MCF 10A (cell line): ENCODE measurements at regions of chr7 and their contacts with region 1.

Region 1: GRCh38 chr7:128209229-128210035 is 31.6 kb upstream of the LEP start:
- DNase-seq: peak; percentile 80
- H3K4me3 Mint-ChIP-seq: no peak overlapping the region
- H3K27ac Mint-ChIP-seq: no peak overlapping the region
- H3K4me1 Mint-ChIP-seq: peaks cover 4% of the 10 kb centered on the region
- H3K27me3 Mint-ChIP-seq: no peaks in the 10 kb centered on the region
- CTCF ChIP-seq: peak; percentile 99

Region 2: DNA sequence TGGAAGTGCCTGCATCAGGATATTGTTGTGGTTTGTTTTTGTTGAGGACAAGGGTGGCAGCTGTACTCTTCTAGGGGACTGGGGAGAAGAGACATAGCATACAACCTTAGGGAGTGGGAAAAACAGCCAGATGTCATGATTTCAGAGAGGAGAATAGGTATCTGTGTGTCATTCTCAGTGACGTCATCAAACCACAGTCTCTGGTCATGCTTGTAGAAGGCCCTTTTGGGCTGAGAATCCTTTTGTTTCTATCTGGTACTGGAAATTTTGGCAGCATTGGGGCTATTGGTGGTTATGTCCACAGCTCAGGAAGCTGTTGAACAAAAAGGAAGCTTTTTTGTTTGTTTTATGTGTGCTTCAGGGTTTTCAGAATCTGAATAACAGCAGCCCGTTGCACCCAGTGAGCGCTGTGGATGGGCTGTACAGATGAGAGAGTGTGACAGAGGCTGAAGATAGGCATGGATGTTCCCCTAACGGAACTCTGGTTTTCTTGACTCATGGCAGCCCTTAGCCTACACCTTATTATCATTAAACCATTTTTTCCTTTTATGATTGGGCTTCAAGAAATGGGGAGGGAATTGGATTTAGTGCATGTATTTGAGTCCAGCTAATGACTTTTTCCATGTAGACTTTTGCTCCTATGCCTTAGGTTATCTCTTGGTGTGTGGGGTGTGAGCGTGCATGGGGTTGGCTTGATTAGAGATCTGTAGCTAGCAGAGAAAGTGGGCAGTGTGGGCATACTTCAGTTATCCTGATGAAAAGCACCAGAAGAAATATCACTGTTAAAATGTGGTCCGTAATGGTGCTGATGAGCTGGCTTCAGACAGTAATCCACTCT is 491.7 kb before region 1 on chr7:
- CTCF ChIA-PET with region 1: interaction called, 239 read pairs
- POLR2A ChIA-PET with region 1: no interaction called
- intact Hi-C with region 1: no loop called
- DNase-seq: peak; percentile 5
- H3K4me3 Mint-ChIP-seq: no peak overlapping the region
- H3K27ac Mint-ChIP-seq: no peak overlapping the region
- H3K4me1 Mint-ChIP-seq: no peaks in the 10 kb centered on the region
- H3K27me3 Mint-ChIP-seq: no peaks in the 10 kb centered on the region
- CTCF ChIP-seq: no peak

Region 3: DNA sequence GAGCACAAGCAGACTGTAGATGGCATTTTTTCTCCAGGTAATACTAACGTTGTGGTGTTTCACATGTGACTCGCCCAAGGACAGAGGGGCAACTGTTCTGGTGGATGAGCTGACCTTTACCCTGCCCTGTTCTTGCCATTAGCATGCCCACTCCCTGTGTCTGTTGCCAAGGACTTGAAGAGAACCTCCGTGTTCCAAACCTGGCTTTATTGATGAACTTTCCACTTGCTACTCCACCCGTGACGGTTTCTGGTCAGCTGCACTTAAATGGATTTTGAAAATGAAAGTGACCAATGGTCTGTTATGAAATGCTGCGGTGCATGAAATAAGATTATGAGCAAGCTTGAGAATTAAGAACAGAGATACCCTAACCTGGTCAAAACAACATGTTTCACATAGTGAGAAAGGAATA is 208.6 kb before region 1 on chr7:
- CTCF ChIA-PET with region 1: interaction called, 12 read pairs
- POLR2A ChIA-PET with region 1: no interaction called
- intact Hi-C with region 1: no loop called
- DNase-seq: no peak
- H3K4me3 Mint-ChIP-seq: no peak overlapping the region
- H3K27ac Mint-ChIP-seq: no peak overlapping the region
- H3K4me1 Mint-ChIP-seq: no peaks in the 10 kb centered on the region
- H3K27me3 Mint-ChIP-seq: no peaks in the 10 kb centered on the region
- CTCF ChIP-seq: no peak

Region 4: DNA sequence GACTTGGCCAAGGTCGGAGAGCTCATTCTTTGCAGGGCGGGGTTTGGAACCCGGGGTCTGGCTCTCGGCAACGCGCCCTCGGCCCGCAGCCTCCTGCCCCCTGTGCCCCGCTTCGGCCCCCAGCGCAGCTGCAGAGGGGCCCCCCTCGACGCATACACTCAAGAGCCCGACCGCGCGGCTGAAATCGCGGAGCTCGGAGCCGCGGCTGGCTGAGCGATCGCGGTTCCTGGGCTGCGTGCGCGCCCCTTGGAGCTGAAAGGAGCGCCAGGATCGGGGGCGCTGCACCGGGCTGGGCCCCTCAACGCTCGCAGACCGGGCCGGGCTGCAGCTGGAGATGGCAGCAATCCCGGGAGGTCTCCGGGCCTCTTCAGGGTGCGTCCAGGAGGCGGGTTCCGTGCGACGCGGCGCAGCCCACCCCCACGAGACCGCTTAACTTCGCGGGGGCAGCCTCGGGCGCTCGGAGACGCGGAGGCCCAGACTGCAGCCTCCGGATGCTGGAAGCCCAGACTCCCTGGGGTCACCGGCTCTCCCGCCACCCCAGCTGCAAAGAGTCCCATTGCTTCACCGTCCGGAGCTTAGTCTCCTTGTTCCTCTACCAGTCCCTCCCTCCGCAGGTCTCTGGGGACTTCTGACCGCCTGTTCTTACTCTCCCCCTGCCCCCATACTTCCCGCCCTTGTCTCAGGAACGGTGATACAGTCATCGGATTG is 105.2 kb before region 1 on chr7:
- CTCF ChIA-PET with region 1: interaction called, 22 read pairs
- POLR2A ChIA-PET with region 1: interaction called, 4 read pairs
- intact Hi-C with region 1: no loop called
- DNase-seq: no peak
- H3K4me3 Mint-ChIP-seq: no peak overlapping the region
- H3K27ac Mint-ChIP-seq: no peak overlapping the region
- H3K4me1 Mint-ChIP-seq: no peaks in the 10 kb centered on the region
- H3K27me3 Mint-ChIP-seq: peaks cover 11% of the 10 kb centered on the region
- CTCF ChIP-seq: no peak

Region 5: DNA sequence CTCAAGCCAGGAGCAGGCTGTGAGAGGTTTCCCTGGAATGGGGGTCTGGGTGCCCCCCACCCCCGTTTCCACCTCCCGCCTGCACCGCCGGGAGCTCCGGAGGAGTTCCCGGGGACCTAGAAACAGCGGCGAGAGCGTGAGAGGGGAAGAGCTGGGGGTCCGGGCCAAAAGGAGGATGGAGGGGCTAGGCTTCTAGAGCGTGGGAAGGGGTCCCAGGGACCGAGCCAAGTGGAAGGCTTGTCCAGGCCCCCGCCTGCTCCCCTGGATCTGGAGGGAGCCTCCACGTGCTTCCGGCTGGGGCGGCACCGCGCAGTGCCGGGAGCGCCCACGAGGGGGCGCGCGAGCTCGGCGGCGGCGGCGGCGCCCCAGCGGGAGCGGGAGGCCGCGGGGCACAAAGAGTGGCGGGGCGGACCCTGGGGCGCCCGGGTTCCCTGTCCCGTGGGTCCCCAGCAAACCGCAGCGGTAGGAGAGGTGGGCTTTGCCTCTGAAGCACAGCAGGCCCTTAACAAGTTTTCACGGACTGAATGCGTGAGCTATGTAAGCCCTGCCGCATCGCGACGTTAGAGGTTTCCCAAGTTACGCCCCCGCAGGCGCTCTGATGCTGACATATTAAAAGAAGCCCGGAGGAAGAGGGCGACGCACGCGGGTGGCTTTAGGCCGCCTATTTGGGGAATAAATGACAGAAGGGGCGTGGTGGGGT is 73.8 kb before region 1 on chr7:
- CTCF ChIA-PET with region 1: interaction called, 188 read pairs
- POLR2A ChIA-PET with region 1: interaction called, 20 read pairs
- intact Hi-C with region 1: loop called (anchors 1 kb)
- DNase-seq: peak; percentile 41
- H3K4me3 Mint-ChIP-seq: peak overlapping the region; percentile 59
- H3K27ac Mint-ChIP-seq: no peak overlapping the region
- H3K4me1 Mint-ChIP-seq: no peaks in the 10 kb centered on the region
- H3K27me3 Mint-ChIP-seq: peaks cover 33% of the 10 kb centered on the region
- CTCF ChIP-seq: peak; percentile 73

Region 6: DNA sequence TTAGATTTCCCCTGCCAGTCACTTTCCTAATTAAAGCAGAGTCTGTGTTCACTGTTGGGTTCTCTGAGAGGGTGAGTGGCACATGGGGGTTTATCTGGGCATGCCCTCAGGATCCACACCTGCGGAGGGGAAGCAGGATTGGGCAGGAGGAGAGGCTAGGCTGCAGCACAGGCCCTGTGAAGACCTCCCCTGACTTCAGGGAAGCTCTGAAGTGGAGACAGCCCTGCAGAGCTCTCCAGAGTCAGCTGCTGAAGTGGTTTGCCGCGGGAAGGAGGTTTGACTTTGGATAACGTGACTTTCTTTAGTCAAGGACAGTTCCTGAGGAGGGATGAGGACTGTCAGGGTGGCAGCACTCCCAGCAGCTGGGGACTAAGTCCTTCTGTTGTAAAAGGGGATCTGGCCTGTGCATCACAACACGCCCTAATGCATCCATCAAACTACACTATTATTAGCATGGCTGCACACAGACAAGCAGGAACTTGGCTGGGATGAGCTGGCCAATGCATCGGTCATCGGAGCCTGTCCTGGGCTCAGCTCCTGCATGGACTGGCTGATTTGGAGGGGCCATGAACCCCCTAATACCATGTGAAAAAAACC is 19.3 kb before region 1 on chr7:
- CTCF ChIA-PET with region 1: interaction called, 13 read pairs
- POLR2A ChIA-PET with region 1: no interaction called
- intact Hi-C with region 1: no loop called
- DNase-seq: no peak
- H3K4me3 Mint-ChIP-seq: no peak overlapping the region
- H3K27ac Mint-ChIP-seq: no peak overlapping the region
- H3K4me1 Mint-ChIP-seq: no peaks in the 10 kb centered on the region
- H3K27me3 Mint-ChIP-seq: peaks cover 59% of the 10 kb centered on the region
- CTCF ChIP-seq: no peak